Heart left ventricle (tissue), 16 donors: ENCODE measurements at regions of chr14 and their contacts with region 1.

Region 1: DNA sequence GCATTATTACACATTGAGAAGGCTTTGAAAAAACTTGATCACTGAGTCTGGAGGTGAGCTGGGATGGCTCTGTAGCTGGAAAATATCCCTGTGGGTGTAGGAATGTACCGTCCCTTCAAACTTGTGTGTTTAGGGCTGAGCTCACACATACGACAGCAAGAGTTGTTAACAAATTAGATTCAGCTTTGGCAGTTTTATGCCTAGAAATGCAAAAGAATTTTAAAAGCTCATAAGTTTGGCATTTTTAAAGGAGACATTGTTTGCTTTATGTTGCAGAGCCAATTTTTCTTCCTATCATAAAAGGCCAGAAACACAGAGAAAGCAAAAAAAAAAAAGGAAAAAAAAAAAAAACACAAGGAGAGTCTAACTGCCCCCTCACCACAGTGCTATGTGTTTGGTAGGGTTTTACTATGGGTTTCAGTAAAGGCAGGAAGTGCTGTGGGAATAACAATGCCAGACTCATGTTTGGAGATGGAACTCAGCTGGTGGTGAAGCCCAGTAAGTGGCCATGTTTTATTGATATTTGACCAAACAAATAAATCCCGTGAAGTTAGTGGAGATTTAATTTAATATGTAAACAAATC is 78.4 kb downstream of the DAD1 start:
- DNase-seq: no peak
- ATAC-seq: no peak
- H3K4me3 ChIP-seq: peak overlapping the region in 1 of 12 donors; percentile 28
- H3K27ac ChIP-seq: peak overlapping the region in 2 of 12 donors; percentile 44 to 47
- H3K4me1 ChIP-seq: peaks cover 0 to 61% (median 33%) of the 10 kb centered on the region in 12 donors
- H3K27me3 ChIP-seq: no peaks in the 10 kb centered on the region
- CTCF ChIP-seq: no peak
- POLR2A ChIP-seq: no peak

Region 2: GRCh38 chr14:22478670-22479069 is 31.9 kb before region 1 on chr14:
- intact Hi-C with region 1: loop called in 3 of 10 experiments (anchors 2 to 5 kb)
- DNase-seq: peak in 3 of 5 donors; percentile 40 to 57 (median 46)
- ATAC-seq: peak in 2 of 4 donors; percentile 61 to 70
- H3K4me3 ChIP-seq: no peak overlapping the region
- H3K27ac ChIP-seq: peak overlapping the region in 2 of 12 donors; percentile 30 to 51
- H3K4me1 ChIP-seq: peaks cover 10 to 88% (median 54%) of the 10 kb centered on the region in 12 donors
- H3K27me3 ChIP-seq: no peaks in the 10 kb centered on the region
- CTCF ChIP-seq: no peak
- POLR2A ChIP-seq: no peak

Region 3: DNA sequence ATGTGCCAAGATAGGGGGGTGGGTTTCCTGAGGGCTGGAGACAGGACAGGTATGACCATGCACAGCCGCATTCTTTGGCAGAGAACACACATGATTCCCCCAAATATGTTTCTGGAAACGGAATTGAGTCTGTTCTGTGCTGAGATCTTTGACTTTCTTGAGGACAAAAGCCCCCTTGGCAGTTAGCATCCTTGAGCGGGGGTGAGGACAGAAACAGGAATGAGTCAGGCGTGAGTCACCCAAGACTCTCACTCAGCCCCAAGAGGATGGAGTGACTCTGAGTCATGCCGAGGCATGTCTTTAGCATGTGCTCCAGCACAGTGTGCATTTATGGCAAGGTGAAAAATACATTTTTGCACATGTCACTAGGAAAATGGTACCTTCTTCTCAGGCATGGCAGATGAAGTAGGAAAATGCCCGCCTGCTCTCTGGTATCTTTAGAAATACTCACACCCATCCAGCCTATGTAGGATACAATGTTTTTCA is 26.3 kb after region 1 on chr14:
- intact Hi-C with region 1: no loop called
- DNase-seq: peak in 4 of 5 donors; percentile 57 to 85 (median 70)
- ATAC-seq: peak; percentile 76 to 97 (median 94)
- H3K4me3 ChIP-seq: peak overlapping the region in 1 of 12 donors; percentile 15
- H3K27ac ChIP-seq: peak overlapping the region in 10 of 12 donors; percentile 9 to 87 (median 40)
- H3K4me1 ChIP-seq: peaks cover 0 to 94% (median 27%) of the 10 kb centered on the region in 12 donors
- H3K27me3 ChIP-seq: no peaks in the 10 kb centered on the region
- CTCF ChIP-seq: no peak
- POLR2A ChIP-seq: no peak

Region 4: DNA sequence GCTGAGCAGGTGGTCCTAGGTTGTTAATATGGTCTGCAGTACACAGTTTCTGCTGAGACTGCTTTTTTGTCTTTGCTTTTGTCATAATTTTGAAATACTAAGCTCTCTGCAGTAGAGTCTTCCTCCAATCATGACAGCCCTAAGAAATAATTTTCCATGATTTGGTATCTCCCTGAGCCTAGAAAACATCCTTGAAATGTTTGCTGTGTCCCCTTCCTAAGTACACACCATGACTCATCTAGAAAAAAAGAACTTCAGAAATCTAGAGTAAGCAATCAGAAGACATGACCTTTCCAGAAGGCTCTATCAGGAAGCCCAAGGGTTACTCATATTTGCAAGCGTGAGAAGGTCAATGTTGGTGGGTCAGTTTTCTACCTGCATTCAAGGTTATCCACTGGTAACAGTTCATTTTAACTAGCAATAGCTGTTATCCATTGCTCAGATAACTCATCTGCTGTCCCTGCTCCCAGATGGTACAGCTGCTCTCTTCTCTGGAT is 62.0 kb after region 1 on chr14:
- intact Hi-C with region 1: no loop called
- DNase-seq: no peak
- ATAC-seq: peak in 1 of 4 donors; percentile 50
- H3K4me3 ChIP-seq: no peak overlapping the region
- H3K27ac ChIP-seq: no peak overlapping the region
- H3K4me1 ChIP-seq: peaks cover 0 to 26% (median 4%) of the 10 kb centered on the region in 12 donors
- H3K27me3 ChIP-seq: no peaks in the 10 kb centered on the region
- CTCF ChIP-seq: no peak
- POLR2A ChIP-seq: no peak

Region 5: DNA sequence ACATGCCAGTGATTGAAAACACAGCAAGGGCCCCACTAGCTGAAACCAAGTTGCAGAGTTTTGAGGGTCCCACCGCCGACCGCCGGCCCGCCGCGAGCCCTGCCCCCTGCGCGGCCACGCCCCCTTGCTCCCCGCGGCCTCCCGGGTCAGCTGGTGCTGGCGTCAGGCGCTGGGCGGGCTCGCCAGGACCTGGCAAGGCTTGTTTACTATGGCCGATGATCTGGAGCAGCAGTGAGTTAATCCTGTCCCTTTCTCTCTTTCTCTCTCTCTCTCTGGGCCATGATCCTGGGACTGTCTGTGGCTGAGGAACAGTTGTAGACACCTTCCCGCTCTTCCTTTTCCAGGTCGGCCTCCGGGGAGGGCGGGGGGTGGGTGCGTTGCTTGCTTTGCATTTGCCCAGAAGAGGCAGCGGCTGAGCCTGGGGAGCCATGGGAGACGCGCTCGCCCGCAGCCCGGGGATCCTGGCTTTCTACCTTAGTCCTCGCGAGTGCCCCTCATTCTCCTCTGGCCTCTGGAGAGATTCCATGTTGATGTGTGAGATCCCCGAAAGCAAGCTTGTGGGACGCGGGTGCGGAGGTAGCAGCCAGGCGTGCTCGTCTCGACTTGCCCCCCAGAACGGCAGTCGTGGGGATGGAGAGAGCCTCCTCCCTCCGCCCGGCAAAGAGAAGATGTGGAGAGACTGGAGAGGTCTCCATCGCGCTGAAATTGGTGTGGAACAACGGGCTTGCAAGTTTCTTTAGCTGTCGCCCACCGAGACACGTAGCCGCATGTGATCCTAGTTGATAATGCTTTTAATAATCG is 87.7 kb after region 1 on chr14 and contains the start of gene ABHD4:
- intact Hi-C with region 1: no loop called
- DNase-seq: peak; percentile 84 to 91 (median 86)
- ATAC-seq: peak; percentile 93 to 99 (median 98)
- H3K4me3 ChIP-seq: peak within 1 kb of the TSS; percentile 43 to 91 (median 82)
- H3K27ac ChIP-seq: peak within 1 kb of the TSS in 11 of 12 donors; percentile 59 to 91 (median 83)
- H3K4me1 ChIP-seq: peaks cover 3 to 27% (median 17%) of the 10 kb centered on the region in 12 donors
- H3K27me3 ChIP-seq: peaks cover 0 to 5% (median 0%) of the 10 kb centered on the region in 9 donors
- CTCF ChIP-seq: no peak
- POLR2A ChIP-seq: peak in 1 of 2 donors; percentile 78
- total RNA-seq, gene ABHD4: 16.8 to 35.5 (median 25.9) TPM